BJ (cell line): ENCODE measurements at regions of chr22 and their contacts with region 1.

Region 1: GRCh38 chr22:36239401-36240171 is at the start of gene APOL2:
- DNase-seq: peak; percentile 66
- H3K4me3 ChIP-seq: peak within 1 kb of the TSS; percentile 61
- H3K27me3 ChIP-seq: no peaks in the 10 kb centered on the region
- CTCF ChIP-seq: peak; percentile 86
- polyA plus RNA-seq, gene APOL2: 24.5 and 27.8 TPM in 2 replicates

Region 2: GRCh38 chr22:36277482-36278291 is 38.1 kb after region 1 on chr22:
- CTCF ChIA-PET with region 1: interaction called, 31 read pairs
- POLR2A ChIA-PET with region 1: no interaction called
- DNase-seq: no peak
- H3K4me3 ChIP-seq: no peak overlapping the region
- H3K27me3 ChIP-seq: no peaks in the 10 kb centered on the region
- CTCF ChIP-seq: peak; percentile 86

Region 3: DNA sequence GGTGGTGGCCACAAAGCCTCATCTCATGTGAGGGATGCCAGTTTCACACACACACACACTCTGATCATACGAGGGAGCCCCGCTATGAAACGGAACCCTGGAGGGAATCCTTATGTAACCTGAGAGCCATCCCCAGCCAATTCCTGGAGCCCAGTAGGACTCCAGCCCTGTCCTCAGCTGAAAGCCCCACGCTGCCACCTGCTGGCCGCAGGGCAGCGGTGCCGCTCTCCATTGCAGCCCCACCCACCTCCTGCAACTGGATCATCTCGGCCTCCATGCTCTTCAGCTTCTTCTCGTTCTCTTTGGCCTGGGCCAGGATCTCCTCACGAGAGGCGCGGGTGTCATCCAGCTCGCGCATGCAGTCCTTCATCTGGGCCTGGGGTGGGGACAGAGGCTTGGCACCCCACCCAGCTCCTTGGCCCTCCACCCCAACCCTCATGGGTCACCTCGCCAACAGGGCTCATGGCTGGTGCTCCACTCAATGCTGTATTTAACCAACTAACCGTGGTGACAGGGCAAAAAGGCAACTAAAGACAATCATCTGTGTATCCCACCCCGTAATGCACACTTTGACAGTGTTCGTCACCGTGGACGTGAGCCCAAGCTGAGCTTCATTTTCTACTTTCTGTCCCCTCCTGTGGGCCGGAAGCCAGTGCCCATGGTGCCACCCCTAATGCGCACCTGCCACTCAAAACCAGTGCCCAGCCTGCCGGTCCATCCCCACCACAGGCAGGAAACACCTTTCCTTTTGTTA is 47.1 kb after region 1 on chr22:
- CTCF ChIA-PET with region 1: interaction called, 10 read pairs
- POLR2A ChIA-PET with region 1: no interaction called
- DNase-seq: peak; percentile 16
- H3K4me3 ChIP-seq: no peak overlapping the region
- H3K27me3 ChIP-seq: no peaks in the 10 kb centered on the region
- CTCF ChIP-seq: peak; percentile 97

Region 4: GRCh38 chr22:36331306-36331911 is 91.8 kb after region 1 on chr22:
- CTCF ChIA-PET with region 1: no interaction called
- POLR2A ChIA-PET with region 1: no interaction called
- DNase-seq: peak; percentile 68
- H3K4me3 ChIP-seq: no peak overlapping the region
- H3K27me3 ChIP-seq: no peaks in the 10 kb centered on the region
- CTCF ChIP-seq: no peak